B cell (primary cell): ENCODE measurements at regions of chr19 and their contacts with region 1.

Region 1: DNA sequence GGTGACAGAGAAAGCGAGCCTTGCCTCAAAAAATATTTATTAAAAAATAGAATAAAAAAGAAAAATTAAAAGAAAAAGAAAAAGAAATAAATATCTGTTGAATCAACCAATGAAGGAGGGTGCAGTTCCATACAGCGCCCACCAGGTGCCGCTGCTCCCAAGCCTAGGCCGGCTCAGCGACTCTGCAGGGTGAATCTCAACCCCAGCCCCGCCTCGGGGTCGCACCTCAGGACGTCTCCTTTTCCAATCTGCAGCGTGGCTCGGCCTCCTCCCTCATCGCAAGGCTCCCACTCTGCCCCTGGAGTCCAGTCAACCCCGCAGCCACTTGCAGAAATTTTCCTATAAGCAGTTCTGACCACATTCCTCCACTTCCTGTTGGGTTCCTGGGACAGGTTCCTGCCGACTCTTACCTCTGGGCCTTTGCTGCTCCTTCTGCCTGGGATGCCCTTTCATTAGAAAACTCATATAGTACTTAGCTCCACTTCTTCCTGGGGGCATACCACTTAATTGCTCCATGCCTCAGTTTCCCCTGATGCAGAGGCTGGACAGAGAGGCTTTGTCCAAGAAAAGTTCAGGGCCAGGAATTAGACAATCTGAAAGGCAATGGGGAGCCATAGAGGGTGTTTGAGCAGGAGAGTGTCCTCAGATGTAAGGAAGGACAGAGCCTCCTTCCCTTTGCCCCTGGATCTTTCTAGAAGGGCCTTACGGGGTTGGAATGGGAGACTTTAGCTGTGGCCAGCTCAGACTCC is 24.3 kb downstream of the NFILZ start:
- DNase-seq: peak; percentile 76
- ATAC-seq: peak; percentile 83
- H3K4me3 ChIP-seq: peak overlapping the region in 3 of 5 experiments; percentile 6 to 56 (median 30)
- H3K4me3 Mint-ChIP-seq: peak overlapping the region; percentile 61
- H3K27ac ChIP-seq: no peak overlapping the region
- H3K27ac Mint-ChIP-seq: no peak overlapping the region
- H3K4me1 ChIP-seq: peaks cover 10 to 13% of the 10 kb centered on the region in 2 donors
- H3K4me1 Mint-ChIP-seq: peaks cover 11% of the 10 kb centered on the region
- H3K27me3 ChIP-seq: peaks cover 0 to 9% (median 0%) of the 10 kb centered on the region in 4 experiments
- H3K27me3 Mint-ChIP-seq: peaks cover 14% of the 10 kb centered on the region
- CTCF ChIP-seq: peak; percentile 99

Region 2: GRCh38 chr19:8552810-8553209 is 102.0 kb before region 1 on chr19:
- CTCF ChIA-PET with region 1: no interaction called
- POLR2A ChIA-PET with region 1: no interaction called
- intact Hi-C with region 1: no loop called
- DNase-seq: no peak
- ATAC-seq: no peak
- H3K4me3 ChIP-seq: no peak overlapping the region
- H3K4me3 Mint-ChIP-seq: no peak overlapping the region
- H3K27ac ChIP-seq: no peak overlapping the region
- H3K27ac Mint-ChIP-seq: peak overlapping the region; percentile 15
- H3K4me1 ChIP-seq: no peaks in the 10 kb centered on the region
- H3K4me1 Mint-ChIP-seq: no peaks in the 10 kb centered on the region
- H3K27me3 ChIP-seq: no peaks in the 10 kb centered on the region
- H3K27me3 Mint-ChIP-seq: no peaks in the 10 kb centered on the region
- CTCF ChIP-seq: no peak

Region 3: GRCh38 chr19:8641908-8642547 is 12.7 kb before region 1 on chr19:
- CTCF ChIA-PET with region 1: interaction called, 19 read pairs
- POLR2A ChIA-PET with region 1: no interaction called
- intact Hi-C with region 1: no loop called
- DNase-seq: peak; percentile 44
- ATAC-seq: no peak
- H3K4me3 ChIP-seq: no peak overlapping the region
- H3K4me3 Mint-ChIP-seq: no peak overlapping the region
- H3K27ac ChIP-seq: no peak overlapping the region
- H3K27ac Mint-ChIP-seq: no peak overlapping the region
- H3K4me1 ChIP-seq: no peaks in the 10 kb centered on the region
- H3K4me1 Mint-ChIP-seq: no peaks in the 10 kb centered on the region
- H3K27me3 ChIP-seq: peaks cover 0 to 14% (median 0%) of the 10 kb centered on the region in 4 experiments
- H3K27me3 Mint-ChIP-seq: peaks cover 32% of the 10 kb centered on the region
- CTCF ChIP-seq: peak; percentile 68

Region 4: GRCh38 chr19:8688930-8689329 is 34.2 kb after region 1 on chr19:
- CTCF ChIA-PET with region 1: interaction called, 114 read pairs
- POLR2A ChIA-PET with region 1: no interaction called
- intact Hi-C with region 1: no loop called
- DNase-seq: no peak
- ATAC-seq: no peak
- H3K4me3 ChIP-seq: no peak overlapping the region
- H3K4me3 Mint-ChIP-seq: no peak overlapping the region
- H3K27ac ChIP-seq: no peak overlapping the region
- H3K27ac Mint-ChIP-seq: no peak overlapping the region
- H3K4me1 ChIP-seq: no peaks in the 10 kb centered on the region
- H3K4me1 Mint-ChIP-seq: no peaks in the 10 kb centered on the region
- H3K27me3 ChIP-seq: peaks cover 0 to 7% (median under 1%) of the 10 kb centered on the region in 4 experiments
- H3K27me3 Mint-ChIP-seq: peaks cover 33% of the 10 kb centered on the region
- CTCF ChIP-seq: no peak

Region 5: DNA sequence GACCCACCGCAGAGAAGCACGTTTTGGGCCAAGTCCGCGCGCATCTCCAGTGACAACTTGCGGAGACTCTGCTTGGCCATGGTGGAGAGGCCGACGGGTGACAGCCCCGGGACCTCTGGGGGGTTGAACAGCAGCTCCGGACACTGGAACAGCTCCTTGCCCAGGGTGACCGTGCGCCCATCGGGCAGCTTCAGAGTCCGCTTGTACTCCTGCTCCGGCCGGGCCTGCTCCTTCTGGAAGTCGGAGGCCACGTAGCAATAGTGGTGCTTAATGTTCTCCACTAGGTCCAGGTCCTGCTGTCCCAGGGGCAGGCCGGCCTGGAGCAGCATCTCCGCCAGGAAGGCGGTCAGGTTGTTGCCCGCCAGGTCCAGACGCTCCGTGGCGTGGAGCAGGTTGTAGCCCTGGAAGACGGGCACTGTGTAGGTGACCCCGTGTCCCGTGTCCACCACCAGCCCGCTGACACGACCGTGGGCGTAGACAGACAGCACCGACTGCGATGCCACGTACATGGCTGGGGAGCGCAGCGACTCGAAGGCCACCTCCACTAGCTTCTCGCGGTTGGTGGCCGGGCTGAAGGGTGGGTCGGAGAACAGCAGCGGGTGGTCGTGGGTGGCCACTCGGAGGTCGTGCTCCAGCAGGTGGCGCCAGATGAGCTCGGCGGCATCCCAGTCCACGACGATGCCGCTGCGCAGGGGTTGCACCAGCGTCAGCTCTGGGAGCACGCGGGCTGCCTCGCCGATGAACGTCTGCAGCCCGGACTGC is 43.1 kb after region 1 on chr19:
- CTCF ChIA-PET with region 1: interaction called, 114 read pairs
- POLR2A ChIA-PET with region 1: no interaction called
- intact Hi-C with region 1: no loop called
- DNase-seq: no peak
- ATAC-seq: no peak
- H3K4me3 ChIP-seq: no peak overlapping the region
- H3K4me3 Mint-ChIP-seq: no peak overlapping the region
- H3K27ac ChIP-seq: no peak overlapping the region
- H3K27ac Mint-ChIP-seq: no peak overlapping the region
- H3K4me1 ChIP-seq: peaks cover 0 to 5% of the 10 kb centered on the region in 2 donors
- H3K4me1 Mint-ChIP-seq: peaks cover 6% of the 10 kb centered on the region
- H3K27me3 ChIP-seq: peaks cover 0 to 17% (median 5%) of the 10 kb centered on the region in 4 experiments
- H3K27me3 Mint-ChIP-seq: peaks cover 47% of the 10 kb centered on the region
- CTCF ChIP-seq: no peak